HepG2 (cell line): ENCODE measurements at regions of chr9 and their contacts with region 1.

Region 1: GRCh38 chr9:130682490-130683121 is 11.0 kb upstream of the EXOSC2 start:
- DNase-seq: peak; percentile 62
- ATAC-seq: peak; percentile 77
- H3K4me3 ChIP-seq: peak overlapping the region; percentile 55 to 76 (median 62)
- H3K27ac ChIP-seq: no peak overlapping the region
- H3K4me1 ChIP-seq: peaks cover 22% of the 10 kb centered on the region
- H3K27me3 ChIP-seq: peaks cover 2 to 18% of the 10 kb centered on the region in 2 experiments; a peak in 3 of 5 replicates
- CTCF ChIP-seq: peak; percentile 90
- EP300 ChIP-seq: no peak
- POLR2A ChIP-seq: no peak
- RAD21 ChIP-seq: peak; percentile 74

Region 2: GRCh38 chr9:130451509-130452388 is 230.9 kb before region 1 on chr9:
- CTCF ChIA-PET with region 1: no interaction called
- POLR2A ChIA-PET with region 1: interaction called, 4 read pairs
- in situ Hi-C with region 1: loop called (anchors 5 kb)
- intact Hi-C with region 1: no loop called
- DNase-seq: peak; percentile 61
- ATAC-seq: peak; percentile 49
- H3K4me3 ChIP-seq: peak overlapping the region in 1 of 3 experiments; percentile 53; a peak in 1 of 6 replicates
- H3K27ac ChIP-seq: no peak overlapping the region
- H3K4me1 ChIP-seq: peaks cover 74% of the 10 kb centered on the region
- H3K27me3 ChIP-seq: no peaks in the 10 kb centered on the region; a peak in 1 of 5 replicates
- CTCF ChIP-seq: peak; percentile 44
- EP300 ChIP-seq: no peak
- POLR2A ChIP-seq: no peak
- RAD21 ChIP-seq: peak; percentile 57; the same call in 1 of the 2 replicates

Region 3: GRCh38 chr9:130461218-130461630 is 221.4 kb before region 1 on chr9:
- CTCF ChIA-PET with region 1: interaction called, 40 read pairs
- POLR2A ChIA-PET with region 1: no interaction called
- in situ Hi-C with region 1: no loop called
- intact Hi-C with region 1: loop called (anchors 1 kb)
- DNase-seq: peak; percentile 28
- ATAC-seq: peak; percentile 72
- H3K4me3 ChIP-seq: no peak overlapping the region
- H3K27ac ChIP-seq: no peak overlapping the region
- H3K4me1 ChIP-seq: peaks cover 12% of the 10 kb centered on the region
- H3K27me3 ChIP-seq: no peaks in the 10 kb centered on the region
- CTCF ChIP-seq: peak; percentile 99
- EP300 ChIP-seq: no peak
- POLR2A ChIP-seq: no peak
- RAD21 ChIP-seq: peak; percentile 98

Region 4: DNA sequence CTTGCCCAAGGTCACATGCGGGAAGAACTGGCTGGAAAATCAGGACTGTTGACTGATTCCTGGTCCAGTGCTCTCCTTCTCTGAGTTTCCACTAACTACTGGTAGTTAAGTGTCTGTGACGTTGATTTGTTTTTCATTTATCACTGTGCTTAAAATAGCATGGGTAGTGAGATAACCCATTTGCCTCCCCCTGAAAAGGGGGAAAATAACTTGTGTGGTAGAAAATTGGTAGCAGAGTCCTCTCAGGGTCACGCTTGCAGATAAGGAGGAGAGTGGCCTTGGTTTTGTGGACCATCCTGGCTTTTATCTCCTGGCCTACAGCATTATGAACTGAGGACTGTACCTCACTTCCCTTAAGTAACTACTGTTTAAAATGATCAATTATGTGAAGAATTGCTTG is 92.3 kb before region 1 on chr9:
- CTCF ChIA-PET with region 1: no interaction called
- POLR2A ChIA-PET with region 1: no interaction called
- in situ Hi-C with region 1: no loop called
- intact Hi-C with region 1: loop called (anchors 10 kb)
- DNase-seq: peak; percentile 53
- ATAC-seq: peak; percentile 62
- H3K4me3 ChIP-seq: peak overlapping the region in 1 of 3 experiments; percentile 24; a peak in 1 of 6 replicates
- H3K27ac ChIP-seq: peak overlapping the region; percentile 61
- H3K4me1 ChIP-seq: peaks cover 36% of the 10 kb centered on the region
- H3K27me3 ChIP-seq: no peaks in the 10 kb centered on the region
- CTCF ChIP-seq: no peak
- EP300 ChIP-seq: peak in 1 of 2 experiments; percentile 40; a peak in 1 of 4 replicates
- POLR2A ChIP-seq: no peak
- RAD21 ChIP-seq: no peak

Region 5: GRCh38 chr9:130693426-130694191 is 11.0 kb after region 1 on chr9 and contains the start of gene EXOSC2:
- CTCF ChIA-PET with region 1: no interaction called
- POLR2A ChIA-PET with region 1: interaction called, 12 read pairs
- in situ Hi-C with region 1: no loop called
- intact Hi-C with region 1: no loop called
- DNase-seq: peak; percentile 95
- ATAC-seq: peak; percentile 86
- H3K4me3 ChIP-seq: peak within 1 kb of the TSS; percentile 77 to 97 (median 89)
- H3K27ac ChIP-seq: peak within 1 kb of the TSS; percentile 67
- H3K4me1 ChIP-seq: peaks cover 59% of the 10 kb centered on the region
- H3K27me3 ChIP-seq: peaks cover 0 to 3% of the 10 kb centered on the region in 2 experiments; a peak in 1 of 5 replicates
- CTCF ChIP-seq: no peak
- EP300 ChIP-seq: no peak
- POLR2A ChIP-seq: peak; percentile 93 to 94
- RAD21 ChIP-seq: no peak
- total RNA-seq, gene EXOSC2: 63.8 and 74.2 TPM in 2 replicates

Region 6: GRCh38 chr9:131111854-131112311 is 429.3 kb after region 1 on chr9:
- CTCF ChIA-PET with region 1: no interaction called
- POLR2A ChIA-PET with region 1: no interaction called
- in situ Hi-C with region 1: no loop called
- intact Hi-C with region 1: no loop called
- DNase-seq: peak; percentile 70
- ATAC-seq: peak; percentile 69
- H3K4me3 ChIP-seq: peak overlapping the region in 1 of 3 experiments; percentile 7; a peak in 1 of 6 replicates
- H3K27ac ChIP-seq: peak overlapping the region; percentile 33
- H3K4me1 ChIP-seq: peaks cover 17% of the 10 kb centered on the region
- H3K27me3 ChIP-seq: peaks cover 0 to under 1% of the 10 kb centered on the region in 2 experiments; a peak in 1 of 5 replicates
- CTCF ChIP-seq: peak; percentile 39; the same call in 1 of the 2 replicates
- EP300 ChIP-seq: no peak
- POLR2A ChIP-seq: no peak
- RAD21 ChIP-seq: no peak